B cell (primary cell): ENCODE measurements at regions of chr2 and their contacts with region 1.

Region 1: GRCh38 chr2:85826990-85827878 is 61.6 kb downstream of the ST3GAL5 start:
- DNase-seq: peak; percentile 88
- ATAC-seq: peak; percentile 99
- H3K4me3 ChIP-seq: peak overlapping the region in 2 of 5 experiments; percentile 16 to 18
- H3K4me3 Mint-ChIP-seq: peak overlapping the region; percentile 59
- H3K27ac ChIP-seq: no peak overlapping the region
- H3K27ac Mint-ChIP-seq: peak overlapping the region; percentile 54
- H3K4me1 ChIP-seq: peaks cover 5 to 15% of the 10 kb centered on the region in 2 donors
- H3K4me1 Mint-ChIP-seq: peaks cover 25% of the 10 kb centered on the region
- H3K27me3 ChIP-seq: no peaks in the 10 kb centered on the region
- H3K27me3 Mint-ChIP-seq: peaks cover 4% of the 10 kb centered on the region
- CTCF ChIP-seq: peak; percentile 88

Region 2: DNA sequence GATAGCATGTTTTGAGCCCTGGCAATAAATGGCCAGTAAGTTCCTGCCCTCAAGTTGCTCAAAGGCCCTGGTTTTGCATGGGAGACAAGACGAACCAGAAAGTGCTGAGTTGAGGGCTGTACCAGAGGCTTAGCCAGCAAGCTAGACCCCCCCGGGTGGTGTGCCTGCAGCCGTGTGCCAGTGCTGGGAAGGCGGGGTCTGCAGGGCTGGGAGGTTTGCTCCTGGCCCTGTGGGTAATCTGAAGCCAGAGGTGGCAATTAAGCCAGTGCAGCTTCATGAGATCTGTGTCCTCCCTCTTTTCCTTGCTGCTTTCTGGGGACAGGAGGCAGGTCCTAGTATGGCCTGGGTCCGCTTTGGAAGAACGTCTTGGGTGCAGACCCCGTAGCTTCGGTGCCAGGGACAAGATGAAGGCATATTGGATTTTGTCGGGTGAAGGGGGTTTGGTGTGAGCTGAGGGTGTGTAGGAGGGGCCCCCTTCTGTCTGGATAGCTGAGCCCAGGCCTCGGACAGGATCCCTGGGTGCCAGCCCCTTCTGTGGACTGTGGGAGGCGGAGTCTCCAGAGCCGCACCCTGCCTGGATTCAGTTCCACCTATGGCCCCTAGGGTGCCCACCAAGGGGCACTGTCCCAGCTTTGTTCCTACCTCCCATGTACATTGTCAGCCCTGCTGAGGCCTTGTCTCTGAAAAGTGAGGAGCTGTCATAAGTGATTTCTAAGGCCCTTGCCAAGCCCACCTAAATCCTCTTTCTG is 57.8 kb before region 1 on chr2:
- CTCF ChIA-PET with region 1: no interaction called
- POLR2A ChIA-PET with region 1: no interaction called
- intact Hi-C with region 1: no loop called
- DNase-seq: no peak
- ATAC-seq: no peak
- H3K4me3 ChIP-seq: no peak overlapping the region
- H3K4me3 Mint-ChIP-seq: no peak overlapping the region
- H3K27ac ChIP-seq: no peak overlapping the region
- H3K27ac Mint-ChIP-seq: no peak overlapping the region
- H3K4me1 ChIP-seq: peaks cover 0 to 8% of the 10 kb centered on the region in 2 donors
- H3K4me1 Mint-ChIP-seq: peaks cover 4% of the 10 kb centered on the region
- H3K27me3 ChIP-seq: peaks cover 0 to 55% (median 10%) of the 10 kb centered on the region in 4 experiments
- H3K27me3 Mint-ChIP-seq: peaks cover 54% of the 10 kb centered on the region
- CTCF ChIP-seq: peak; percentile 23

Region 3: GRCh38 chr2:85785027-85785822 is 42.0 kb before region 1 on chr2:
- CTCF ChIA-PET with region 1: no interaction called
- POLR2A ChIA-PET with region 1: no interaction called
- intact Hi-C with region 1: no loop called
- DNase-seq: no peak
- ATAC-seq: no peak
- H3K4me3 ChIP-seq: no peak overlapping the region
- H3K4me3 Mint-ChIP-seq: no peak overlapping the region
- H3K27ac ChIP-seq: no peak overlapping the region
- H3K27ac Mint-ChIP-seq: no peak overlapping the region
- H3K4me1 ChIP-seq: no peaks in the 10 kb centered on the region
- H3K4me1 Mint-ChIP-seq: peaks cover 2% of the 10 kb centered on the region
- H3K27me3 ChIP-seq: peaks cover 0 to 11% (median 3%) of the 10 kb centered on the region in 4 experiments
- H3K27me3 Mint-ChIP-seq: peaks cover 13% of the 10 kb centered on the region
- CTCF ChIP-seq: no peak

Region 4: GRCh38 chr2:85813982-85814801 is 13.0 kb before region 1 on chr2:
- CTCF ChIA-PET with region 1: interaction called, 15 read pairs
- POLR2A ChIA-PET with region 1: no interaction called
- intact Hi-C with region 1: no loop called
- DNase-seq: peak; percentile 82
- ATAC-seq: peak; percentile 89
- H3K4me3 ChIP-seq: no peak overlapping the region
- H3K4me3 Mint-ChIP-seq: no peak overlapping the region
- H3K27ac ChIP-seq: no peak overlapping the region
- H3K27ac Mint-ChIP-seq: no peak overlapping the region
- H3K4me1 ChIP-seq: no peaks in the 10 kb centered on the region
- H3K4me1 Mint-ChIP-seq: no peaks in the 10 kb centered on the region
- H3K27me3 ChIP-seq: peaks cover 0 to 9% (median 1%) of the 10 kb centered on the region in 4 experiments
- H3K27me3 Mint-ChIP-seq: peaks cover 20% of the 10 kb centered on the region
- CTCF ChIP-seq: peak; percentile 92

Region 5: GRCh38 chr2:85846411-85846810 is 19.2 kb after region 1 on chr2:
- CTCF ChIA-PET with region 1: interaction called, 52 read pairs
- POLR2A ChIA-PET with region 1: no interaction called
- intact Hi-C with region 1: no loop called
- DNase-seq: no peak
- ATAC-seq: no peak
- H3K4me3 ChIP-seq: no peak overlapping the region
- H3K4me3 Mint-ChIP-seq: no peak overlapping the region
- H3K27ac ChIP-seq: no peak overlapping the region
- H3K27ac Mint-ChIP-seq: peak overlapping the region; percentile 32
- H3K4me1 ChIP-seq: peaks cover 10 to 22% of the 10 kb centered on the region in 2 donors
- H3K4me1 Mint-ChIP-seq: peaks cover 30% of the 10 kb centered on the region
- H3K27me3 ChIP-seq: no peaks in the 10 kb centered on the region
- H3K27me3 Mint-ChIP-seq: no peaks in the 10 kb centered on the region
- CTCF ChIP-seq: no peak

Region 6: GRCh38 chr2:85865539-85866164 is 38.4 kb after region 1 on chr2:
- CTCF ChIA-PET with region 1: interaction called, 14 read pairs
- POLR2A ChIA-PET with region 1: no interaction called
- intact Hi-C with region 1: no loop called
- DNase-seq: no peak
- ATAC-seq: no peak
- H3K4me3 ChIP-seq: no peak overlapping the region
- H3K4me3 Mint-ChIP-seq: peak overlapping the region; percentile 12
- H3K27ac ChIP-seq: peak overlapping the region in 1 of 2 donors; percentile 68
- H3K27ac Mint-ChIP-seq: peak overlapping the region; percentile 62
- H3K4me1 ChIP-seq: peaks cover 31 to 34% of the 10 kb centered on the region in 2 donors
- H3K4me1 Mint-ChIP-seq: peaks cover 73% of the 10 kb centered on the region
- H3K27me3 ChIP-seq: no peaks in the 10 kb centered on the region
- H3K27me3 Mint-ChIP-seq: no peaks in the 10 kb centered on the region
- CTCF ChIP-seq: no peak

Region 7: GRCh38 chr2:86035883-86036668 is 208.8 kb after region 1 on chr2:
- CTCF ChIA-PET with region 1: interaction called, 171 read pairs
- POLR2A ChIA-PET with region 1: interaction called, 13 read pairs
- intact Hi-C with region 1: loop called (anchors 1 kb)
- DNase-seq: peak; percentile 93
- ATAC-seq: peak; percentile 71
- H3K4me3 ChIP-seq: peak overlapping the region; percentile 16 to 64 (median 36)
- H3K4me3 Mint-ChIP-seq: peak overlapping the region; percentile 87
- H3K27ac ChIP-seq: peak overlapping the region; percentile 98 to 99
- H3K27ac Mint-ChIP-seq: peak overlapping the region; percentile 100
- H3K4me1 ChIP-seq: peaks cover 54 to 63% of the 10 kb centered on the region in 2 donors
- H3K4me1 Mint-ChIP-seq: peaks cover 66% of the 10 kb centered on the region
- H3K27me3 ChIP-seq: no peaks in the 10 kb centered on the region
- H3K27me3 Mint-ChIP-seq: no peaks in the 10 kb centered on the region
- CTCF ChIP-seq: peak; percentile 63

Region 8: GRCh38 chr2:86079981-86080911 is 253.0 kb after region 1 on chr2:
- CTCF ChIA-PET with region 1: interaction called, 528 read pairs
- POLR2A ChIA-PET with region 1: interaction called, 15 read pairs
- intact Hi-C with region 1: loop called (anchors 1 kb)
- DNase-seq: peak; percentile 88
- ATAC-seq: peak; percentile 76
- H3K4me3 ChIP-seq: no peak overlapping the region
- H3K4me3 Mint-ChIP-seq: peak overlapping the region; percentile 66
- H3K27ac ChIP-seq: peak overlapping the region; percentile 83 to 88
- H3K27ac Mint-ChIP-seq: peak overlapping the region; percentile 94
- H3K4me1 ChIP-seq: peaks cover 22 to 35% of the 10 kb centered on the region in 2 donors
- H3K4me1 Mint-ChIP-seq: peaks cover 37% of the 10 kb centered on the region
- H3K27me3 ChIP-seq: no peaks in the 10 kb centered on the region
- H3K27me3 Mint-ChIP-seq: no peaks in the 10 kb centered on the region
- CTCF ChIP-seq: peak; percentile 78

Region 9: DNA sequence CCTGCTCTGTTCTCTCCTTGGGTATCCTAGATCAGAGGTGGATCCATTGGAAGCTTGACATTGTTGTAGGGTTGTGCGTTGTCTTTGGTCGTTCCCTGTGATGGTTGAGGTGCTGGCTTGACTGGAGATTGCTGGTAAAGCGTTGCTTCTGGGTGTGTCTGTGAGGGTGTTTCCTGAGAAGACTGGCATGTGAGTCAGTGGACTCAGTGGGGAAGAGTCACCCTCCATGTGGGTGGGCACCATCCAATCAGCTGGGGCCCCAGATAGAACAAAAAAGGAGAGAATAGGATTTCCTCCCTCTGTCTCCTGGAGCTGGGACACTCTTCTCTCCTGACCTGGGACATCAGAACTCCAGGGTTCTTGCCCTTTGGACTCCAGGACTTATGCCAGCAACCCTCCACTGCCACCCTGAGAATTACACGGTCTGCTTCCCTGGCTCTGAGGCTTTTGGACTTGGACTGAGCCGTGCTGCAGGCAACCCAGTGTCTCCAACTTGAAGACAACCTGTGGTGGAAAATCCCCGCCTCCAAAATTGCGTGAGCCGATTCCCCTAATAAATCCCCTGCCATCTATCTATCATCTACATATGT is 525.0 kb after region 1 on chr2:
- CTCF ChIA-PET with region 1: no interaction called
- POLR2A ChIA-PET with region 1: no interaction called
- intact Hi-C with region 1: no loop called
- DNase-seq: no peak
- ATAC-seq: no peak
- H3K4me3 ChIP-seq: no peak overlapping the region
- H3K4me3 Mint-ChIP-seq: no peak overlapping the region
- H3K27ac ChIP-seq: no peak overlapping the region
- H3K27ac Mint-ChIP-seq: no peak overlapping the region
- H3K4me1 ChIP-seq: no peaks in the 10 kb centered on the region
- H3K4me1 Mint-ChIP-seq: no peaks in the 10 kb centered on the region
- H3K27me3 ChIP-seq: peaks cover 0 to 10% (median 0%) of the 10 kb centered on the region in 4 experiments
- H3K27me3 Mint-ChIP-seq: peaks cover 24% of the 10 kb centered on the region
- CTCF ChIP-seq: no peak